Cardiac septum (tissue), 1 donor: ENCODE measurements at regions of chr12 and their contacts with region 1.

Region 1: GRCh38 chr12:10829994-10830393 is 3.8 kb upstream of the TAS2R10 start:
- DNase-seq: no peak

Region 2: DNA sequence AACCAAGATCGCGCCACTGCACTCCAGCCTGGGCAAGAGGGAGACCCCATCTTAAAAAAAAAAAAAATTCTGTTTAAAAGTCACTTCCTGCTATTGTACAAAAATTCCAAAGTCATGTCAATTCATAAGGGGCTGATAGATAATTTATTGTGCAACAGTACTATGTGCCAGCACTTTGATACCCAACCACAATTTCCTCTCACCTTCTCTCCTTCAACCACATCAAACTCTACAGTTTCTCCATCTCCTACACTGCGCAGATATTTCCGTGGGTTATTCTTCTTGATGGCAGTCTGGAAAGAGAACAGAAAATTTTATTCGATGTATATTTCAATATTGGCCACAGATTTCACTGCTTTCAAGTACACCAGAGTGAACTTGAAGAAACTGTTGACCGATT is 114.5 kb before region 1 on chr12:
- intact Hi-C with region 1: no loop called
- DNase-seq: no peak

Region 3: DNA sequence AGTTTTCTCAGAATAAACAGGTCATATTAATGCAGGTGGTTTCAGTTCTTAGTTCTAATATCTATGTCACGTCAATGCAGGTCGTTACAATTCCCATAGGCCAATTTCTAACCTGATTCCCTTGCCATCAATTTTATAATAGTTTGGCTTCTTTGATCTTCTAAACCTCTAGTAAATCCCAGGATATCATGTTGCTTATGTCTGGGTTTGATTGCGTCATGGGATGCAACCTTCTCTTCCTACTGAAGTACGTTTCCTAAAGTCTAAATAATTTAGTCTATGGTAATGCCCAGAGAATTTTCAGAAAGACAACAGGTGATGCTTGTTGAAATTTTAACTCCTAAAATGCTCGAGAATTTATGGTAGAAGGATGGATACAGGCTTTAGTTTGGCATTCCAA is 46.7 kb before region 1 on chr12:
- intact Hi-C with region 1: no loop called
- DNase-seq: no peak

Region 4: DNA sequence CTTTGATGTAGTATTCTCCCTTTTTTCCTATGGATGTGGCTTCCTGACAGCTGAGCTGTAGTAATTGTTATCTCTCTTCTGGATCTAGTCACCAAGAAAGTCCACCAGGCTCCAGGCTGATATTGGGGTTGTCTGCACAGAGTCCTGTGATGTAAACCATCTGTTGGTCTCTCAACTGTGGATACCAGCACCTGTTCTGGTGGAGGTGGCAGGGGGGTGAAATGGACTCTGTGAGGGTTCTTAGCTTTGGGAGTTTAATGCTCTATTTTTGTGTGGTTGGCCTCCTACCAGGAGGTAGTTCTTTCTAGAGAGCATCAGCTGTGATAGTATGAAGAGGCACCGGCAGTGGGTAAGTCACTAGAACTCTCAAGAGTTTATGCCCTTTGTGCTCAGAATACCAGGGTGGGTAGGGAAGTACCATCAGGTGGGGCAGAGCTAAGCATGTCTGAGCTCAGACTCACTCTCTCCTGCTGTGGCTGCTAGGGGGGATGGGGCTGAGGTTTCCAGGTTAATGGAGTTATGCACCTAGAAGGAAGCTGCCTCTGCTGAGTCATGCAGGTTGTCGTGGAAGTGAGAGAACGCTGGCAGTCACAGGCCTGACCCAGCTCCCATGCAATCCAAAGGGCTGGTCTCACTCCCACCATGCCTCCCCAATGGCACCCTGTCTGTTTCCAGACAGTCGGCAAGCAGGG is 112.1 kb after region 1 on chr12:
- intact Hi-C with region 1: loop called (anchors 10 kb)
- DNase-seq: no peak